Aorta (tissue), 5 donors: ENCODE measurements at regions of chr1 and their contacts with region 1.

Region 1: DNA sequence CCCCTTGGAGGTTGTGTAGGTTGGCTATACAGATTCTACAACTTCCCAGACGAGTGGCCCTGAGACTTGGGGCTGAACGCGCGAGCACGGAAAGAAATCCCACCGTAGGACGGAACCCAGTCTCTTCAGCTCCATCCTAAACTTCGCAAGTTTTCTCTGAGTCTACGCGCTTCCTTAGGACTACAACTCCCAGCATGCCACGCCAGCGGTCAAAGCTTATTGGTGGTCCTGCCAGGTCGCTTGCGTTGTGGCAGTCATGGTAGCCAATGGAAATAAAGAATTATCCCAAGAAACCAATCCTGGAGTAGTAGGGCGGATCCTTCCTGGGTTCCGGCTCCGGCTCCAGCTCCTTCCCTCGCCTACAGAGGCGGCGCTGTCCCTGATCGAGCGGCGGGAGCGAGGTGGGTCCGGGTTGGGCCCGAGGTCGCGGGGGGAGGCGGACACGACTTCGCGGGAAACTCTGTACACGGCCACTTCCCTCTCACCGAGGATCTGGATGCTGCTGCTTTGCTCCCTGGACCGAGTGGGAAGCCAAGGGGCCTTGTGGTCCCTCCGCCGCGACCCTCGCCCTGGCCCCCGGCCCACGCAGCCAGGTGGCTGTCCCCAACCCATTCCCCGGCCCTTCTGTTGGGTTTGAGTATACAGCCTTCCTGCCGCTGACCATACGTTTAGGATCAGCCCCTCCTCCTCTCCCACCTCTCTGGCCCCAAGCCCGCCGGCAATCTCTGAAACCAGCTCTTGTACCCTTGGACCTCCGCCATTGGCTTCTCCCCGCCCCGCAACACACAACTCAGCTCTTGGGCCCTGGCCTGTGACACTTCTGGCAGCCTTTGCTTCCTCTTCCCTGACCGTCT is at the start of gene ZNF691:
- DNase-seq: peak; percentile 94 to 97
- ATAC-seq: peak; percentile 99
- H3K4me3 ChIP-seq: peak within 1 kb of the TSS; percentile 81 to 96
- H3K27ac ChIP-seq: no peak within 1 kb of the TSS
- H3K4me1 ChIP-seq: peaks cover 0 to 2% of the 10 kb centered on the region in 2 donors
- H3K27me3 ChIP-seq: no peaks in the 10 kb centered on the region
- total RNA-seq, gene ZNF691: 5.4 to 9.8 TPM

Region 2: DNA sequence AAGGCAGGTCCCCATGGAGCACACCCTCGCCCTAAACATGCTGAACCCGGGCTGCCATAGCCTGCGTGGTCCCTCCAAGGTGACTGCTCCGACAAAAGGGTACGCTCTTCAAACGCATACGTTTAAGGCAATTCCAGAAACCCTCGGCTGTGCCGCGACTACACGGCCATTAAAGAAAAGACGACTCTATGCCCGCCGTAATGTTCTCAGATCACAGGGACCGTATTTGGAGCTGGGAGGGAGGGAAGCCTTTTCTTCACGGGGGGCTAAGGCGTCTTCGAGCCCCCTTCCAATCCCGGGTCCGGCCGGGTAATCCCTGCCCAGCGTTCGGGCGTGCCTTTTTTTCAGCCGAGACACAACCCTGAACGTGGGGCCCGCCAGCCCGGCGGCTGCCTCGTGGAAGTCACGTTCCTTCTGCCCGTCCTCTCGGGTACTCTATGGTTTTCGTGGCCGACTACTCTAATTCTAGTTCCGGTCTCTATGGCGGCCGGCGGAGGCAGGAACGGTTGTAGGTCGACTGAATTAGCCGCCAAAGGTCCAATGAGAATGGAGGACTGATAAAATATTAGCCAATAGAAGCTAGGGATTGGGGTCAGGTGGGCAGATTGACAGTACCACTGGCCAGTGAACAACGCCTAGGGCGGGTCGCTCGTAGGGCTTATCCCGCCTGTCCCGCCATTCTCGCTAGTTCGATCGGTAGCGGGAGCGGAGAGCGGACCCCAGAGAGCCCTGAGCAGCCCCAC is 164.6 kb before region 1 on chr1 and contains the start of gene YBX1:
- intact Hi-C with region 1: loop called in 1 of 2 experiments (anchors 10 kb)
- DNase-seq: peak; percentile 97
- ATAC-seq: peak; percentile 99
- H3K4me3 ChIP-seq: peak within 1 kb of the TSS; percentile 95 to 96
- H3K27ac ChIP-seq: peak within 1 kb of the TSS in 1 of 2 donors; percentile 83
- H3K4me1 ChIP-seq: peaks cover 8 to 11% of the 10 kb centered on the region in 2 donors
- H3K27me3 ChIP-seq: no peaks in the 10 kb centered on the region
- total RNA-seq, gene YBX1: 393 to 498 TPM

Region 3: GRCh38 chr1:42766741-42767509 is 79.6 kb before region 1 on chr1 and contains the starts of genes C1orf50 and P3H1:
- intact Hi-C with region 1: loop called in 1 of 2 experiments (anchors 10 kb)
- DNase-seq: peak; percentile 100
- ATAC-seq: peak; percentile 98
- H3K4me3 ChIP-seq: peak within 1 kb of the TSS; percentile 86 to 90
- H3K27ac ChIP-seq: peak within 1 kb of the TSS; percentile 24 to 61
- H3K4me1 ChIP-seq: peaks cover 0 to 4% of the 10 kb centered on the region in 2 donors
- H3K27me3 ChIP-seq: no peaks in the 10 kb centered on the region
- total RNA-seq, gene C1orf50: 3.6 to 8.5 TPM
- total RNA-seq, gene P3H1: 37.7 to 54.6 TPM

Region 4: GRCh38 chr1:43171876-43172526 is 325.5 kb after region 1 on chr1 and contains the starts of genes CFAP57 and EBNA1BP2:
- intact Hi-C with region 1: loop called in 1 of 2 experiments (anchors 1 kb)
- DNase-seq: peak; percentile 93 to 95
- ATAC-seq: peak; percentile 95
- H3K4me3 ChIP-seq: peak within 1 kb of the TSS; percentile 23 to 45
- H3K27ac ChIP-seq: no peak within 1 kb of the TSS
- H3K4me1 ChIP-seq: no peaks in the 10 kb centered on the region
- H3K27me3 ChIP-seq: no peaks in the 10 kb centered on the region
- total RNA-seq, gene CFAP57: 0.13 TPM in 1 of 2 donors, not detected in the other
- total RNA-seq, gene EBNA1BP2: 28.0 to 29.0 TPM